Activated CD4-positive, alpha-beta T cell treated with anti-CD3 and anti-CD28 coated beads, Interleukin-2, amount 10 ng/mL, durations not matched to agents 7 days and 5 days (primary cell): ENCODE measurements at regions of chr9 and their contacts with region 1.

Region 1: DNA sequence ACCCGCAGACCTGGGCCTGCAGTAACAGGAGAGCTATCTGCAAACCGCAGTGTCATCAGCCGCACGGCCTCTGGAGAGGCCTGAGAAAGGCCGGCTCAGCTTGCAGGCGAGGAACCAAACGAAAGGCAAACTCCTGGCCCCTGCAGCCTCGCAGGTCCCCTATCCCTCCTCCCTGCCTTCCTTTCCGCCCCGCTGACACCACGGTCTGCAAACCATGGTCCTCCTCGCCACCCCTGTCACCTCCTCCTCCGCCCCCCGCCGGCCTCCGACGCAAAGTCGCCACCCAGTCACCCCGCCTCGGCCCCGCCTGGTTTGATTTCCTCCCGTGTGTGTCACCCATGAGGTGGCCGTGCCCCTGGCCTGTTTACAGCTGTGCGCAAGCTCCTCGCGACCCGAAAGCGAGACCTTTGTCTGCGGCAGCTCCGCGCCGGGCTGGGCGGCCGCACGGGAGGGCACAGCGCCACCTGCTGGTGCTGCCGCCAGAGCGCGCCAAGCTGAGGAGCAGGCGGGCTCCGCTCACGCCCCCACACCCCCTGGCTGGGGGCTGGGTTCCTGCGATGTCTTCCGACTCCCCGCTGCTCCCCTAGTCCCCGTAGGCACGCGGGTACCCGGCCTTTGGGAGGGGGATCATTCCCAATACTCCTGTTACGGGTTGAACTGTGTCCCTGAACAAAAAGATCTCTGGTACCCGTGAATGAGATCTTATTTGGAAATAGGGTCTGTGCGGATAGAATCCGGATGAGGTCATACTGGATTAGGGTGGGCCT is 19.4 kb downstream of the GBGT1 start:
- DNase-seq: peak; percentile 89
- H3K4me3 Mint-ChIP-seq: peak overlapping the region; percentile 66
- H3K27ac Mint-ChIP-seq: peak overlapping the region; percentile 91
- H3K4me1 Mint-ChIP-seq: peaks cover 78% of the 10 kb centered on the region
- H3K27me3 Mint-ChIP-seq: no peaks in the 10 kb centered on the region

Region 2: DNA sequence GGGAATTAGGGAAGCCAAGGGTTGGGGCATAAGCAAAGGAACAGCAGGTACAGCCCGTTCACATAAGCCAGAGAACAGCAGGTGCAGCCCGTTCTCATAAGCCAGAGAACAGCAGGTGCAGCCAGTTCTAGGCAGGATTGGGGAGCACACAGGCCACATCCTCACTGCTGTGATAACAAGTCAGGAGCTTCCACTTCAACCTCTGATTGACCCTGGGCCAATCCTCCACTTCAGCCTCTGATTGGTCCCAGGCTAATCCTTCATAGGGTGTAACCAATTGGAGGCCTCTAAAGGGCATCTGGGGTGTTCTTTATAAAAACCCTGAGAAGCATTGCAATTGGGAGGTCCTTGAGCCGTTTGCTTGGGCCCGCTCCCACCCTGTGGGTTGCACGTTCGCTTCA is 55.0 kb before region 1 on chr9:
- CTCF ChIA-PET with region 1: no interaction called
- POLR2A ChIA-PET with region 1: no interaction called
- DNase-seq: no peak
- H3K4me3 Mint-ChIP-seq: no peak overlapping the region
- H3K27ac Mint-ChIP-seq: no peak overlapping the region
- H3K4me1 Mint-ChIP-seq: no peaks in the 10 kb centered on the region
- H3K27me3 Mint-ChIP-seq: no peaks in the 10 kb centered on the region

Region 3: GRCh38 chr9:133115448-133116345 is 28.6 kb before region 1 on chr9:
- CTCF ChIA-PET with region 1: interaction called, 110 read pairs
- POLR2A ChIA-PET with region 1: no interaction called
- DNase-seq: peak; percentile 53
- H3K4me3 Mint-ChIP-seq: no peak overlapping the region
- H3K27ac Mint-ChIP-seq: peak overlapping the region; percentile 69
- H3K4me1 Mint-ChIP-seq: peaks cover 63% of the 10 kb centered on the region
- H3K27me3 Mint-ChIP-seq: no peaks in the 10 kb centered on the region

Region 4: GRCh38 chr9:133122935-133123611 is 21.2 kb before region 1 on chr9:
- CTCF ChIA-PET with region 1: interaction called, 45 read pairs
- POLR2A ChIA-PET with region 1: no interaction called
- DNase-seq: no peak
- H3K4me3 Mint-ChIP-seq: no peak overlapping the region
- H3K27ac Mint-ChIP-seq: peak overlapping the region; percentile 55
- H3K4me1 Mint-ChIP-seq: peaks cover 69% of the 10 kb centered on the region
- H3K27me3 Mint-ChIP-seq: no peaks in the 10 kb centered on the region

Region 5: DNA sequence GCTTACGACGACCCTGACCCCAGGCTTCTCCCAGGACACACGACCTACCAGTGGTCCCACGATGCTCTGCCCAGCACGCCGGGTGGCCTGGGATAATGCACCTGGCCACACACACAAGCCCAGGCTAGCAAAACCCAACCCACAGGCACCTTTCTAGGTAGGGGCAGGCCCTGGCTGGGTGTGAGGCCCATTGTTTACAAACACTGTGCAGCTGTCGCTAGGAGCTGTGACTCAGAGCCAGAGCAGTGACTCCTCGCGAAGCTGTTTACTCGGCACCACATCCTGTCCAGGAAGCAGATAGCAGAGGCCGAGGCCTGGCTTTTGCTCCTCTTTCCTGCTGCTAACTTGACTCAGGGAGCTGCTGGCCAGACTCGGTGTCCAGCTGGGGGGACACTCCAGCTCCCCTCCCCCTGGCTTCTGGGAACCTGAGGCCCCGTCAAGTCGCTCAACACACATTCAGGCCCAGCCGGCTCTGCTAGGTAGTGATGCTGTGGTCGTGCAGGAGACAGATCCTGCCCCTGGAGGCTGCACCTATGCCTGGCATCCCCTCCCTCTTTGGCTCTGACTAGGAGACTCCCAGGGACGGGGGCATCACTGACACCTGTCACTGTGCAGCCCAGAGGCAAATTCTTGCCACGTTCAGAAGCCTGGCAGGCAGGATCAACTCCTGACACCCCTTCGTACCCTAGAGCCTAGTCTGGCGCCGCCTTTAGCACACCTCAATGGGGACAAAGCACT is 10.5 kb before region 1 on chr9:
- CTCF ChIA-PET with region 1: interaction called, 53 read pairs
- POLR2A ChIA-PET with region 1: interaction called, 6 read pairs
- DNase-seq: peak; percentile 96
- H3K4me3 Mint-ChIP-seq: peak overlapping the region; percentile 61
- H3K27ac Mint-ChIP-seq: peak overlapping the region; percentile 100
- H3K4me1 Mint-ChIP-seq: peaks cover 82% of the 10 kb centered on the region
- H3K27me3 Mint-ChIP-seq: no peaks in the 10 kb centered on the region